K562 (cell line): ENCODE measurements at regions of chr9 and their contacts with region 1.

Region 1: DNA sequence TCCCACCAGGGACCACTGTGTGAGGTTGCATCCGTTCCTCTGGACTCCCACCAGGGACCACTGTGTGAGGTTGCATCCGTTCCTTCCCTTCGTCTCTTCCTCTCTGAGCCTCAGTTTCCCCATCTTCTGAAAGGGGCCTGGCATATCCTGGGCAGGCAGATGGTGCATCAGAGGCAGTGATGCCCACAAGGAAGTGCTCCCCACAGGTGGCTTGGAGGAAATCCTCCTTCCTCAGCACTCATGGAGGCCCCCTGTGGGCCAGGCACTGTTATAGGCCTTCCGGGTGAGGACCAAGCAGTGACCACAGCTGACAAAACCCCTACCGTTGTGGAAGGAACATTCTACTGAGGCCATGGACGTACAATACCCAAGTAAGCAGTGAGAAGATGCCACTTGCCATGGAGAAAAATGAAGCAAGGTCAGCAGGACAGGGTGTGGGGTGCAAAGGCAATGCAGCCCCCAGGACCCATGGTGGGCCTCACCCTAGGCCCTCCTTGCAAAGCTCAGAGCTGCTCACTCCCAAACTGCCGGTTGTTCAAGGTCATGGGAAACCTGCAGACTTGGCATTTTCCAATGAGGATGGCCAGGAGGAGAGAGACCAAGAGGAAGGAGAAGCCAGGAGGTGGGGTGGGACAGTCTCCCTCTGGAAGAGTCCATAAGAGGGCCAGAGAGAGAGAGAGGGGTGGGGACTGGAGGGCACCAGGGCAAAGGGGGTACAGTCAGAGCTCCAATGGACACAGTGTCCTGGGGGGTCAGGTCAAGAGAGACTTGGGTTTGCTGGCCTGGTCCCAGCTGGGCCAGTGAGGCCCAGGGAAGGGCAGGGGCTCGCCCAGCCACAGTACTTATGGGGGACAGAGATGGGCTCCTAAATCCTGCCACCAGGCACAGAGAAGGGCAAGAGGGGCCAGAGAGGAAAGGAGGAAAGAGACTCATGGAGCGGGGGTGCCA is 51.1 kb downstream of the C9orf50 start:
- DNase-seq: peak; percentile 55 to 65 (median 60)
- ATAC-seq: peak; percentile 75
- H3K4me3 ChIP-seq: no peak overlapping the region
- H3K27ac ChIP-seq: peak overlapping the region; percentile 85
- H3K4me1 ChIP-seq: peaks cover 27 to 43% of the 10 kb centered on the region in 2 experiments
- H3K27me3 ChIP-seq: no peaks in the 10 kb centered on the region
- CTCF ChIP-seq: peak; percentile 54 to 69 (median 60)
- EP300 ChIP-seq: no peak
- POLR2A ChIP-seq: no peak
- RAD21 ChIP-seq: peak in 1 of 2 experiments; percentile 56; a peak in 2 of 4 replicates

Region 2: DNA sequence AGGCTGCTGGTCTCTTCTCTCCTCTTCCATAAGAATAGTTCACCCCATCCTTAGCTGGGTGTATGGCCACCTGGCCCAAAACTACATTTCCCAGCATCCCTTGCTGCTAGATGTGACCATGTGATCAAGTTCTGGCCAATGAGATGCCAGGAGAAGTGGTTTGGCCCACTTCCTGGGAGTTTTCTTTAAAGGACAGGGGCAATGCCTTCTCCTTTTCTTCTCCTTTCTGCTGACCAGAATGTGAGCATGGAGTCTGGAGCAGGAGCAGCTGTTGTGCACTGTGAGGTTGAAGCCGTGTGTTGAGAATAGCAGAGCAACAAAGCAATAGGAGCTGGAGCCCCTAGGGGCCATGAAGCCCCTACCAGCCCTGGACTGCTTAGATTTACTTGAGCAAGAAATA is 14.4 kb after region 1 on chr9:
- CTCF ChIA-PET with region 1: no interaction called
- POLR2A ChIA-PET with region 1: interaction called, 13 read pairs
- in situ Hi-C with region 1: no loop called
- intact Hi-C with region 1: no loop called
- DNase-seq: peak; percentile 90 to 92 (median 91)
- ATAC-seq: peak; percentile 84
- H3K4me3 ChIP-seq: no peak overlapping the region
- H3K27ac ChIP-seq: peak overlapping the region; percentile 51
- H3K4me1 ChIP-seq: peaks cover 26 to 35% of the 10 kb centered on the region in 2 experiments
- H3K27me3 ChIP-seq: no peaks in the 10 kb centered on the region
- CTCF ChIP-seq: no peak
- EP300 ChIP-seq: no peak
- POLR2A ChIP-seq: no peak
- RAD21 ChIP-seq: no peak